ENCODE measurements at regions of chr5 and their contacts with region 1.

Region 1: DNA sequence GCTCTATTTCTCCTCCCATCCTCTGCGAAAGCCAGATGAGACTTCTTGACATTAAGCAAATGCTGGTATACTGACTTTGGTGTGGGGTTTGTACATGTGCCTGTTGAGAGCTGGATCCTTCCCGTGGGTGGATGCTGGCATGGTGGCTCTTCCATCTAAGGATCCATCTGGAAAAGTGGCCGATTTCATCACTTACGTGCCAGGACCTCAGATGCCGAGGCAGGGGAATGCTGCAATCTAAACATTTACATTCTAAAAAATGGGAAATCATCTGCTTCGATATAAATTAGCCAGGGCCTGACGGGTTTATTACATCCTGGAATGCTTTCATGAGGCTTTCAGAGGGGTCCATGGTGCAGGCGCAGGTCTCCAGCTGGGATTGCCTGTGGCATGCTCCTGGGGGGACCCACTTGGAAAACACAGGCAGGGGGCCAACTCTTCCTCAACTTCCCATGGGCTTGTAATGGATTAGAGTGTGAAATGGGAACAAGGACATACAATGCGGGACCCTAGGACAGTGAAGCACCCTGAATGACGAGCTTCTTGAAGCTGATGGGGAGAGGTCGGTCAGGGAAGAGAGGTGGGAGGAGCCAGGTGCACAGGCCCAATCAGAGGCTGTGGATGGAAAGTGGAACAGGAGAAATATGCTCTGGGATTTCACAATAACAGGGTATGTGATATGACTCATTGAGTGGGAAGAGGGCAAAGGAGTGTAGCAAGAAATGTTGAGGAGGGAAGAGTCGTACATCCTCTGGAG is 105.5 kb upstream of the PITX1 start:
- DNase-seq: peak; percentile 85
- H3K4me3 ChIP-seq: no peak overlapping the region
- H3K27ac ChIP-seq: peak overlapping the region; percentile 50
- H3K4me1 ChIP-seq: peaks cover 56% of the 10 kb centered on the region
- H3K27me3 ChIP-seq: no peaks in the 10 kb centered on the region
- CTCF ChIP-seq: no peak

Region 2: GRCh38 chr5:135106610-135107471 is 32.7 kb before region 1 on chr5:
- CTCF ChIA-PET with region 1: no interaction called
- dilution Hi-C with region 1: no loop called
- in situ Hi-C with region 1: no loop called
- intact Hi-C with region 1: loop called (anchors 2 kb)
- DNase-seq: peak; percentile 93
- H3K4me3 ChIP-seq: no peak overlapping the region
- H3K27ac ChIP-seq: no peak overlapping the region
- H3K4me1 ChIP-seq: peaks cover 27% of the 10 kb centered on the region
- H3K27me3 ChIP-seq: no peaks in the 10 kb centered on the region
- CTCF ChIP-seq: no peak

Region 3: DNA sequence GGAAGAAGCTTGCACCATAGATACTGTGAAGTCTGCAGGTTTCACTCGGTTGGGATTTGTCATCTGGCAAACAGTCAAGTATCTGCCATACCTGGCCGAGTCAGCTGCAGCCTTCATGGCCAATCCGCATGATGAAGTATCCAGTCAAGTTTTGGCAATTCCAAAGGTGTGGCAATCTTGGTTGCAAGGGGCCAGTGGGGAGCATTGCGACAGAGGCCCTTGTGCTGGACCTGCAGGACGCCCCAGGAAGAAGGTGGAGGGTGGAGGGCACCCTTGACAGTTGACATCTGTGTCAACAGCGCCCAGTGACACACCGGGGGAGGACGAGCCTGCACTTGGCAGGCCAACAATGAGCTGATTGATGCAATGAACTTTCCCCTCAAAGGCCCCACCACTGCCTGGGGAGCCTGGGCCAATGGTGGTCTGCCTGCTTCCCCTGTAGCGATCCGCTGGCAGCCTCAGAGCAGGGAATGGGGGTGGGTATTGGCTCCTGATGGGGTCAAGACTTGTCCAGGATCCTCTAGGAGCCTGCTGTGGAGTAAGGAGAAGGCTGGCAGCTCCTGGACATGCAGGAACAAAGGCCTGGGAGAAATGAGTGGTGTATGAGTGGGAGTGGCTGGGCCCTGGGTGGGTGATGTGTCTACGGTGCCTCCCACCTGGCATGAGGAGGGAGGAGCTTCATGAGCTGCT is 17.3 kb after region 1 on chr5:
- CTCF ChIA-PET with region 1: no interaction called
- dilution Hi-C with region 1: no loop called
- in situ Hi-C with region 1: no loop called
- intact Hi-C with region 1: loop called (anchors 2 kb)
- DNase-seq: peak; percentile 98
- H3K4me3 ChIP-seq: no peak overlapping the region
- H3K27ac ChIP-seq: peak overlapping the region; percentile 79
- H3K4me1 ChIP-seq: peaks cover 41% of the 10 kb centered on the region
- H3K27me3 ChIP-seq: no peaks in the 10 kb centered on the region
- CTCF ChIP-seq: no peak

Measured in mammary epithelial cell (primary cell).